ENCODE measurements at regions of chr1 and their contacts with region 1.

Region 1: GRCh38 chr1:181397845-181398244 is 85.5 kb upstream of the CACNA1E start:
- DNase-seq: no peak
- H3K4me3 ChIP-seq: no peak overlapping the region
- H3K27ac ChIP-seq: no peak overlapping the region
- H3K4me1 ChIP-seq: no peaks in the 10 kb centered on the region
- H3K27me3 ChIP-seq: peaks cover 0 to 3% of the 10 kb centered on the region in 2 donors
- CTCF ChIP-seq: no peak

Region 2: GRCh38 chr1:181438013-181438412 is 40.2 kb after region 1 on chr1:
- intact Hi-C with region 1: no loop called
- DNase-seq: no peak
- H3K4me3 ChIP-seq: no peak overlapping the region
- H3K27ac ChIP-seq: no peak overlapping the region
- H3K4me1 ChIP-seq: no peaks in the 10 kb centered on the region
- H3K27me3 ChIP-seq: peaks cover 0 to 10% of the 10 kb centered on the region in 2 donors
- CTCF ChIP-seq: no peak

Region 3: GRCh38 chr1:181769846-181770245 is 372.0 kb after region 1 on chr1:
- intact Hi-C with region 1: loop called (anchors 5 kb)
- DNase-seq: no peak
- H3K4me3 ChIP-seq: no peak overlapping the region
- H3K27ac ChIP-seq: no peak overlapping the region
- H3K4me1 ChIP-seq: no peaks in the 10 kb centered on the region
- H3K27me3 ChIP-seq: no peaks in the 10 kb centered on the region
- CTCF ChIP-seq: no peak

Measured in tibial artery (tissue), 4 donors.